SK-N-SH (cell line): ENCODE measurements at regions of chr3 and their contacts with region 1.

Region 1: DNA sequence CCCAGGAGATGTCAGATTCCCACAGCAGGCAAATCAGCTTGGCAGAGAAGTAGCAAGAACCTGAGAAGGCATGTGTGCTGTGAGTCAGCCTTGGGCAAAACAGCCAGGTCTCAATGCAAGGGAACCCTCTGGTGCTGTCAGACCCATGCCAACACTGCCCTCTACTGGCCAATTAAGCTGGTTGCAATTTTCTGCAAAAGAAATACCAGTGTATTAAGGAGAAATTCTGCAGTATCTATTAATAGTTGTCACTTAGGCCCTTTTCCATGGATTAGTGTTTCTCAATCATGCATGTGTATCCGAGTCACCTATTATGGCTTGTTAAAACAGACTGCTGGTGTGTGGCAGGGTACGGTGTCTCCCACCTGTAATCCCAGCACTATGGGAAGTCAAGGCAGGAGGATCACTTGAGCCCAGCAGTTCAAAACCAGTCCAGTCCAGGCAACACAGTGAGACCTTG is 26.2 kb downstream of the MAP4 start:
- DNase-seq: peak; percentile 72
- H3K4me3 ChIP-seq: no peak overlapping the region
- H3K27ac ChIP-seq: peak overlapping the region in 1 of 2 experiments; percentile 66; a peak in 1 of 4 replicates
- H3K4me1 ChIP-seq: peaks cover 6 to 14% of the 10 kb centered on the region in 2 experiments; a peak in 3 of 4 replicates
- H3K27me3 ChIP-seq: no peaks in the 10 kb centered on the region
- CTCF ChIP-seq: peak; percentile 96
- EP300 ChIP-seq: no peak
- RAD21 ChIP-seq: peak; percentile 97

Region 2: DNA sequence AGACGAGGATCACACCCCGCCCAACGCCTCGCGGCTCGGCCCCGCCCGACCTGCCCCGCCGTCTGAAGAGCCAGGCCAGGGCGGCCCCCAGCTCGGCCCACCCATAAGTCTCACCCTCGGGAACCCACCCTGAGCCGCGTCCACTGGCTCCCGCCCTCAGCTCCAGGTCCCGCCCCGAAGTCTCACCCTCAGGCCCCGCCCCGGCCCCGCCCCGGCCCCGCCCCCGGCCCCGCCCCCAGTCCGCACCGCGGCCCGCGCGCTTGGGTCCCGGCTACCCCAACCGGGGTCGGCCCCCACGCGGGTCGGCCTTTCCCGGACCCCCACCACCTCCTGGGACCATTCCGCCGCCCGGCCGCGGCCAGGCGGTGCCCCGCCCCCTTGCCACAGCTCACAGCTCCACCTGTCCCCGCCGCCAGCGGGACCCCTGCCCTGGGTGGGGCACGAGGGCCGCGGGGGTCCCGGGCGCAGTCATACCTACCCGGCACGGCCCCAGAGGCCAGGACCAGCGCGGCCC is 411.8 kb before region 1 on chr3:
- CTCF ChIA-PET with region 1: no interaction called
- POLR2A ChIA-PET with region 1: no interaction called
- DNase-seq: peak; percentile 93
- H3K4me3 ChIP-seq: peak overlapping the region; percentile 53 to 57; a peak in 3 of 4 replicates
- H3K27ac ChIP-seq: no peak overlapping the region
- H3K4me1 ChIP-seq: peaks cover 0 to 13% of the 10 kb centered on the region in 2 experiments; a peak in 1 of 4 replicates
- H3K27me3 ChIP-seq: peaks cover 7% of the 10 kb centered on the region; the same call in 1 of the 2 replicates
- CTCF ChIP-seq: no peak
- EP300 ChIP-seq: no peak
- RAD21 ChIP-seq: no peak

Region 3: GRCh38 chr3:47824541-47825473 is 165.2 kb before region 1 on chr3:
- CTCF ChIA-PET with region 1: interaction called, 31 read pairs
- POLR2A ChIA-PET with region 1: interaction called, 3 read pairs
- DNase-seq: peak; percentile 98
- H3K4me3 ChIP-seq: peak overlapping the region; percentile 74 to 95
- H3K27ac ChIP-seq: peak overlapping the region; percentile 66 to 69
- H3K4me1 ChIP-seq: peaks cover 3 to 15% of the 10 kb centered on the region in 2 experiments; a peak in 1 of 4 replicates
- H3K27me3 ChIP-seq: no peaks in the 10 kb centered on the region
- CTCF ChIP-seq: peak; percentile 78
- EP300 ChIP-seq: no peak
- RAD21 ChIP-seq: peak; percentile 25; the same call in 1 of the 2 replicates

Region 4: DNA sequence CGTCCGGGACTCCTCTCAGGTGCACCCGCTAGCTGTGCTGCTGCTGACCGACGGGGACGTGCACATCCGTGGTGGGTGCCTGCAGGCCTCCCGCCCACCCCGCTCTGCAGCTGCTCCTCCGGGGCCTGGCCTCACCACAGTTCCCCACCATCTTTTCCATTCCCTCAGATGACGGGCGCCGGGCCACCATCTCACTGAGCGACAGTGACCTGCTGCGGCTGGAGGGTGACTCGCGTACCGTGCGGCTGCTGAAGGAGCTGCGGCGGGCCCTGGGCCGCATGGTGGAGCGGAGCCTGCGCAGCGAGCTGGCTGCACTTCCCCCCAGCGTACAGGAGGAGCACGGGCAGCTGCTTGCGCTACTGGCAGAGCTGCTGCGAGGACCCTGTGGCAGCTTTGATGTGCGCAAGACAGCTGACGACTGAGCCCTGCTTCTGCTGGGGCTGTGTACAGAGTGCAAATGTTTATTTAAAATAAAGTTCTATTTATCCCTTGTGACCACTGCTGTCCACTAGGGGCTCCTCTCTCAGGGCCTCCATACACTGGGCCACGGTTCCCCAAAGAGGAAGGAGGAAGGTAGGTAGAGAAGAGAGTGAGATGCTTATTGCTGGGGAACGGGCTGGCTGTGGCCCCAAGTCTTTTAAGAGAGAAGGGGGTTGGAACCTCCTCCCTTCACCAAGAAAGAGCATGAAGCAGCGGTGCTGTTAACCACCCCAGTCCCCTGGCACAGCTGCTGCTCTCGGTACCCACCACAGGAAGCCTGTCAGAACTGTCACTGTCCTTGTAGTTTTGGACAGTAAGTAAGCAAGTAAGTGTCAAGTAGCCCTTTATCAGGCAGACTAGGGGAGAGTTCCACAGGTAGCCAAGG is 140.1 kb before region 1 on chr3:
- CTCF ChIA-PET with region 1: interaction called, 18 read pairs
- POLR2A ChIA-PET with region 1: no interaction called
- DNase-seq: peak; percentile 61
- H3K4me3 ChIP-seq: no peak overlapping the region
- H3K27ac ChIP-seq: no peak overlapping the region; a peak in 1 of 4 replicates
- H3K4me1 ChIP-seq: no peaks in the 10 kb centered on the region
- H3K27me3 ChIP-seq: no peaks in the 10 kb centered on the region
- CTCF ChIP-seq: peak; percentile 62
- EP300 ChIP-seq: no peak
- RAD21 ChIP-seq: peak; percentile 30

Region 5: DNA sequence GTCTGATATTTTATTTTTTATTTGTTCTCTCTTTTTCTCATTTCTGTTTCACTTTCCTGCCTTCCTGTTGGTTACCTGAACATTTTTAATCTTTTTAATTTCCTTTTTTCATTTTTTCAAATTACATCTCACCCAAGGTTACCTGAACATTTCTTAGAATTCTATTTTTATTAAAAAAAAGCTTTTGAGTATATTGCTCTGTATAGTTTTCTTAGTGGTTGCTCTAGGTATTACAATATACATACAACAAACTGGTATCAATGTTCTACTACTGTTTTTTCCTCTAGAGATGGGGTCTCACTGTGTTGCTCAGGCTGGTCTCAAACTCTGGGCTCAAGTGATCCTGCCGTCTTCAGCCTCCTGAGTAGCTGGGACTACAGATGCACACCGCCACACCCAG is 107.7 kb before region 1 on chr3:
- CTCF ChIA-PET with region 1: interaction called, 12 read pairs
- POLR2A ChIA-PET with region 1: no interaction called
- DNase-seq: no peak
- H3K4me3 ChIP-seq: no peak overlapping the region
- H3K27ac ChIP-seq: no peak overlapping the region
- H3K4me1 ChIP-seq: 0 out of 4 replicates have a peak, but pooled peaks cover 0 to 15% of the 10 kb centered on the region in 2 experiments
- H3K27me3 ChIP-seq: no peaks in the 10 kb centered on the region
- CTCF ChIP-seq: peak; percentile 33; the same call in 1 of the 2 replicates
- EP300 ChIP-seq: no peak
- RAD21 ChIP-seq: no peak

Region 6: GRCh38 chr3:47976135-47976732 is 13.8 kb before region 1 on chr3:
- CTCF ChIA-PET with region 1: interaction called, 20 read pairs
- POLR2A ChIA-PET with region 1: interaction called, 3 read pairs
- DNase-seq: no peak
- H3K4me3 ChIP-seq: no peak overlapping the region
- H3K27ac ChIP-seq: peak overlapping the region in 1 of 2 experiments; percentile 24; a peak in 1 of 4 replicates
- H3K4me1 ChIP-seq: no peaks in the 10 kb centered on the region; a peak in 1 of 4 replicates
- H3K27me3 ChIP-seq: no peaks in the 10 kb centered on the region
- CTCF ChIP-seq: no peak
- EP300 ChIP-seq: no peak
- RAD21 ChIP-seq: no peak

Region 7: GRCh38 chr3:48013288-48013980 is 23.4 kb after region 1 on chr3:
- CTCF ChIA-PET with region 1: interaction called, 16 read pairs
- POLR2A ChIA-PET with region 1: no interaction called
- DNase-seq: no peak
- H3K4me3 ChIP-seq: no peak overlapping the region
- H3K27ac ChIP-seq: peak overlapping the region; percentile 39 to 74
- H3K4me1 ChIP-seq: peaks cover 44 to 56% of the 10 kb centered on the region in 2 experiments
- H3K27me3 ChIP-seq: no peaks in the 10 kb centered on the region
- CTCF ChIP-seq: no peak
- EP300 ChIP-seq: peak in 1 of 2 experiments; percentile 23; a peak in 2 of 4 replicates
- RAD21 ChIP-seq: no peak

Region 8: DNA sequence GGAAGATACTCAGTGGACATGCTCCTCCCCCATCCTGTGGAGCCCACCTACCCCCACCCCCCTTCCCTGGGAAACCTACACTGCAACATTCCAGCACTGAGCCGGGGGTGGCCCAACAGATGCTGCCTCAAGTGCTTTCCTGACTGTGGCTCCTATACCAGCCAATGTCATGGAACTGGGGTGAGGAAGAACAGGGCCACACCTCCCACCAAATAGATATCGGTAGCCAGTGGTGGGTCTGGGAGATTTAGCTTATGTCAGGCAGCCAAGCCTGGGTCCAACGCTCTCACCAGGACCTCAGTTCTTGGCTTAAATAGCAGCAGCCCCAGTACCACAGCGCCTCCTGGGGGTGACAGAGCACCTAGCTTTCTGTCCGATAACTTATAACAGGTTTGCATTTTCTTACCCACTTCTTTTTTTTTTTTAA is 168.0 kb after region 1 on chr3:
- CTCF ChIA-PET with region 1: interaction called, 30 read pairs
- POLR2A ChIA-PET with region 1: no interaction called
- DNase-seq: peak; percentile 52
- H3K4me3 ChIP-seq: no peak overlapping the region; a peak in 1 of 4 replicates
- H3K27ac ChIP-seq: no peak overlapping the region
- H3K4me1 ChIP-seq: no peaks in the 10 kb centered on the region; a peak in 1 of 4 replicates
- H3K27me3 ChIP-seq: no peaks in the 10 kb centered on the region
- CTCF ChIP-seq: peak; percentile 83
- EP300 ChIP-seq: no peak
- RAD21 ChIP-seq: peak; percentile 60

Region 9: GRCh38 chr3:48232734-48233133 is 242.7 kb after region 1 on chr3:
- CTCF ChIA-PET with region 1: no interaction called
- POLR2A ChIA-PET with region 1: no interaction called
- DNase-seq: peak; percentile 81
- H3K4me3 ChIP-seq: peak overlapping the region in 1 of 2 experiments; percentile 29; a peak in 1 of 4 replicates
- H3K27ac ChIP-seq: no peak overlapping the region; a peak in 1 of 4 replicates
- H3K4me1 ChIP-seq: peaks cover 0 to 2% of the 10 kb centered on the region in 2 experiments; a peak in 1 of 4 replicates
- H3K27me3 ChIP-seq: no peaks in the 10 kb centered on the region
- CTCF ChIP-seq: peak; percentile 65
- EP300 ChIP-seq: no peak
- RAD21 ChIP-seq: peak; percentile 79